GM18951 (cell line): ENCODE measurements at regions of chr13 and their contacts with region 1.

Region 1: GRCh38 chr13:31909864-31910551 is 121.6 kb upstream of the FRY start:
- POLR2A ChIP-seq: no peak

Region 2: GRCh38 chr13:31476266-31476665 is 433.7 kb before region 1 on chr13:
- in situ Hi-C with region 1: no loop called
- POLR2A ChIP-seq: no peak

Region 3: GRCh38 chr13:31797154-31797775 is 112.7 kb before region 1 on chr13:
- in situ Hi-C with region 1: no loop called
- POLR2A ChIP-seq: no peak

Region 4: DNA sequence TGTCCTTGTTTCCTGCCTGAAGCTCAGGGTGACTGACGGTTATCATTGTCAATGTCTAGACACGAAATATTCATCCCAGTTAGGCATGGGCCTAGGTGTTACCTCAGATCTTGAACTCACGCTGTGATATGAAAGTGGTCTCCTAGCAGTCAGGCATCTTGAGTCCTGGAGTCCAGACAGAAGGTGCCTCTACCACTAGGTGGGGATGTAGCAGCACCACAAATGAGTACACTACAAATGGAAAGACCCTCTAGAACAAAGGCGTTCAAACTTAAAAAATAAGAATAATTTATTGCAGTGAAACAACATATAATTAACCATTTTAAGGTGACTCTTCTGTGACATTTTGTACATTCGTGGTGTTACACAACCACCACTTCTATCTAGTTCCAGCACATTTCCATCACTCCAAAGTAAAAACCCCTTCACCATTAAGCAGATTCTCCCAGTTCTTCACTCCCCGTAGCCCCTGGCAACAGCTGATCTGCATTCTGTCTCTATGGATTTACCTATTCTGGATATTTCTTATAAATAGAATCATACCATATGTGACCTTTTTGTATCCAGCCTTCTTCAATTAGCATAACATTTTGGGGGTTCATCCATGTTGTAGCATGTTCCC is 109.7 kb after region 1 on chr13:
- in situ Hi-C with region 1: loop called (anchors 10 kb)
- POLR2A ChIP-seq: no peak

Region 5: DNA sequence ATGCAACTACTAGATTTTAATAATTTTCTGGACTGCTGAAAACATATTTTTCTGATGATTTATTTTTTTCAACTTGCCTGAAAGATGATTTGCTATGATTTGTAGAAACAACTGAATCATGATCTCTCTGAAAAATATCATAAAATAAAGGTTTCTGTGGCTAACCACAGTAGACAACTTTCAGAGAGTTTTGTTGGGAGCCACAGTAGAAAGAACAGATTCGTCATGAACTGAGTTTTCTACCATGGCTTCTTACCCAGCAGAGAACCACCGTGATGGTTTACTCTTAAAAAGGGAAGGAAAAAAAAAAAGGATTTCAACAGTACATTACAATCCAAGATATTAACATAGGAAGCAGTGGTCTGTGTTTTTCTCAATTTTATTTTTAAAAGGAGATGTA is 387.2 kb after region 1 on chr13:
- in situ Hi-C with region 1: loop called (anchors 10 kb)
- POLR2A ChIP-seq: no peak